Aorta (tissue), 5 donors: ENCODE measurements at regions of chr3 and their contacts with region 1.

Region 1: DNA sequence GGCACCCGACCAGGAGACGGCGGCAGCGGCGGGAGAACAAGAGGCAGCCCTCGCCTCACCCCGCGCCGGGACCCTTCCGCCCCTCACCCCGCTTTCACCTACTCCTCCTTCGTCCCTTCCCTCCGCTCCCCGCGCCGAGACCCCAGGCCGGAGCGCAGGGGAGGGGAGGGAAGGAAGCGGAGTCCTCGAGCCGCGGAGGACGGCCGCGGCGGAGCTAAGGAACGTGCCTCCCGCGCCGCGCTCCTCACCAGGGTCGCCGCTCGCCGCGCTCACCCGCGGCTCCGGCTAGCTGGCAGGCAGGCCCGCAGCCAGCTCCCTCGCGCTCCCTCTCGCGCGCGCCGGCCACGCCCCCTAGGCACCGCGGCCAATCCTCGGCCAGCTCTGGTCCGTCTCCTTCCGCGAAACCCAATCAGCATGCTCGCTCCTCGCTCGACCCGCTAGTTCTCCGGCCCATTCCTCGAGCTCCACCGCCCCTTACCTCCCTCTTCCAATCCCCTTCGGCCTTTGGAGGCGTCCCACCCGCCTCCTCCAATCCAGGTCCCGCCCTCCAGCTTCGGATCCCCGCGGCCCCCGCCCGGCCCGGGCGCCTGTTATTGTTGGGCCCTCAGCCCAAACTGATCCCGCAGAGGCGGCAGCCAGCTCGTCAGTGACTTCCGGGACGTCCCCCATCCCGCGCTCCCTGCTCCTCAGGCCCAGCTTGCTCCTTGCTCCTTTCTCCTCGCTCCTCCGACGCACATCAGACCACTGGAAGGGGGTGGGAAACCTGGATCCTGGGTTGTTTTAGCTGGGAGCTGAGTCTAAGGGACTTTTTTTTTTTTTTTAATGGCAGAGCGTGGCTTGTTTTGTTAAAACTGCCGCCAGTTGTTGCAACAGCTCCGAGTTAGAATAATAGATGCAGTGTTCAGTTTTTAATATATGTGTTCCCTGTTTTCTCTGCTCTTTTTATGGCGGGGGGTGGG is at the start of gene DCBLD2:
- DNase-seq: peak; percentile 98 to 99
- ATAC-seq: peak; percentile 98
- H3K4me3 ChIP-seq: peak within 1 kb of the TSS; percentile 65 to 80
- H3K27ac ChIP-seq: peak within 1 kb of the TSS; percentile 24 to 76
- H3K4me1 ChIP-seq: peaks cover 0 to 7% of the 10 kb centered on the region in 2 donors
- H3K27me3 ChIP-seq: no peaks in the 10 kb centered on the region
- total RNA-seq, gene DCBLD2: 27.5 to 36.3 TPM

Region 2: DNA sequence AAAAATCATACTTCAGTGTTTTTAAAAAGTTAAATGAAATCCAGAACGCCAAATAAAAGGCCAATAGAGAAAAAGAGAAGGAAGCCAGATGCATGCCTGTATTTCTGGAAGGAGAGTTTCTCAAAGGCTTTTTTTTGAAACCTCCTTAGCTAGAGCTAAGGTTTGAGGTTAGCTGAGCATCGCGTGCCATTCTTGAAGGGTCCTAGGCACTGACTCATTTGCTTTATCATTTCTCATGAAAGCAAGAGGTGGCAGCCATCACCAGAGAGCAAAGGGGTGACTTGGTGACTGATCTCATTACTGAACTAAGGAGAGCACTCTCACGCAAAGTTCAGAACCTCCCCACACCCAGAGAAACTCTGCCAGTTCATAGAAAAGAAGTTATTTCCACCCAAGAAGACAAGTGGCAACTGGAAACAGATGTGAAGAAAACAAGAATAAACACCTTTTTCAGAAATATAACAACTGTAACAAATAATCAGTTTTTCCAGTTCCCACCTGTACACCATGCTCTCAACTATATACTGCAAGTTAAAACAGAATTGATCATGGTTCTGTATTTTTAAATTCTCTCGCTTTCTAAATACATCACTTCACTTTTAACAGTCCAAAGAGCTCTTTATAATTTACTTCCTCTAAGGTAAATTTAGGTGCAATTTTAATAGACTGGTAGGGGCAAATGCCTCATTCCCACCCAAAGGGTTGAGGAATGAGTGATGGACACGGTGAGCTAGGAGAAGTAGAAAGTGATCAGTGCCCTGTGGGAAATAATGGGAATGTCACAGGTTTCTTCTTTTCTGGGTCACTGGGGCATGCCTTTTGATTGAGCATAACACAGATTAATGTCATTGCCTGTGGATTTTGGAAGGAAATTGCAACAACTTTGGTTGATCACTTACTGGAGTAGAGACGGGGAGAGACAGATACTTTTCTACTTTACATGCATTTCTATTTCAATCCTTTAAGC is 345.2 kb before region 1 on chr3:
- intact Hi-C with region 1: no loop called
- DNase-seq: no peak
- ATAC-seq: no peak
- H3K4me3 ChIP-seq: no peak overlapping the region
- H3K27ac ChIP-seq: no peak overlapping the region
- H3K4me1 ChIP-seq: no peaks in the 10 kb centered on the region
- H3K27me3 ChIP-seq: no peaks in the 10 kb centered on the region

Region 3: DNA sequence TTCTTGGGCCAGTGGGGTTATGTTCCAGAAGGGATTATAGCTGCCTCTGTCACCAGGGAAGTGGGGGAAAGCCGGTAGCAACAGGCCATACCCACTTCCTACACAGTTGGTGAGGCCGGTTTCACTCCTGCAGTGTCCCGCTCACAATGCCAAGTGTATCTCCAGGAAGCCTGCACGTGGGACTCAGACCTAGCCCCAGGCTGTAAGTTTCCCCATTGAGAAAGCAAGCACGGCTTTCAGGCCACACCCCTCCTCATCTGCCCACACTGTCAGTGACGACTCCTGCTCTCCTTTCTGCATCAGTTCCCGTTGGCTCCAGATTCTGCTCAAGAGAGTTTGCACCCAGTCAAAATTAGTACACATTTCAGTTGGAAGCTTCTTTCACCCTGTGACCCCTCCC is 256.6 kb before region 1 on chr3:
- intact Hi-C with region 1: no loop called
- DNase-seq: no peak
- ATAC-seq: no peak
- H3K4me3 ChIP-seq: no peak overlapping the region
- H3K27ac ChIP-seq: no peak overlapping the region
- H3K4me1 ChIP-seq: no peaks in the 10 kb centered on the region
- H3K27me3 ChIP-seq: no peaks in the 10 kb centered on the region

Region 4: DNA sequence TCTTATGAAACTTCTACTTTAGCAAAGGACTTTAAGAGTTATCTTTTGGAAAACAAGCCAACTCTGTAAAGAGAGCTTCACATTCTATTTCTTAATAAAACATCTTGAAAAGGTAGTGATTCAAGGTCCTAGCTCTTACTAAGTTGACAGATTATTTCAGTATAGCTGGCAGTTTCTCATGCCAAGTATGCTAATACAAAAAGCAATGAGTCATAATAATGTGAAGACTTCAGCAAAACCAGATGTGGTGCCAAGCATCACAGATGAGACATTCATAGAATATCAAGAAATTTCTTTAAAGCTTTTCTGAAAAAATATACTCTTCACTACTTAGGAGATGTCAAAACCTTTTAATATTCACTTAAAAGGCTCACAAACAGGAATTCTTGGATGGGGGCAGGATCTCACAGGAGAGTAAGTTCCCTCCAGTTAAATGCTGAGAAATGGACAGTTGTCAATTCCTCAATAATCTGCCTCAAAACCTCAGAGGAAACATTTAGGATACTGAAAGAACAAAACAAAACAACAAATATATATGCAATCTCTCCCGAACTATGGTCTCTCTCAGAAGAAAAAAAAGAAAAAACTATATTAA is 45.8 kb before region 1 on chr3:
- intact Hi-C with region 1: loop called in 1 of 2 experiments (anchors 5 kb)
- DNase-seq: no peak
- ATAC-seq: no peak
- H3K4me3 ChIP-seq: no peak overlapping the region
- H3K27ac ChIP-seq: no peak overlapping the region
- H3K4me1 ChIP-seq: no peaks in the 10 kb centered on the region
- H3K27me3 ChIP-seq: no peaks in the 10 kb centered on the region

Region 5: GRCh38 chr3:98962189-98962930 is 60.7 kb after region 1 on chr3:
- intact Hi-C with region 1: no loop called
- DNase-seq: no peak
- ATAC-seq: no peak
- H3K4me3 ChIP-seq: no peak overlapping the region
- H3K27ac ChIP-seq: no peak overlapping the region
- H3K4me1 ChIP-seq: peaks cover 0 to 1% of the 10 kb centered on the region in 2 donors
- H3K27me3 ChIP-seq: no peaks in the 10 kb centered on the region

Region 6: DNA sequence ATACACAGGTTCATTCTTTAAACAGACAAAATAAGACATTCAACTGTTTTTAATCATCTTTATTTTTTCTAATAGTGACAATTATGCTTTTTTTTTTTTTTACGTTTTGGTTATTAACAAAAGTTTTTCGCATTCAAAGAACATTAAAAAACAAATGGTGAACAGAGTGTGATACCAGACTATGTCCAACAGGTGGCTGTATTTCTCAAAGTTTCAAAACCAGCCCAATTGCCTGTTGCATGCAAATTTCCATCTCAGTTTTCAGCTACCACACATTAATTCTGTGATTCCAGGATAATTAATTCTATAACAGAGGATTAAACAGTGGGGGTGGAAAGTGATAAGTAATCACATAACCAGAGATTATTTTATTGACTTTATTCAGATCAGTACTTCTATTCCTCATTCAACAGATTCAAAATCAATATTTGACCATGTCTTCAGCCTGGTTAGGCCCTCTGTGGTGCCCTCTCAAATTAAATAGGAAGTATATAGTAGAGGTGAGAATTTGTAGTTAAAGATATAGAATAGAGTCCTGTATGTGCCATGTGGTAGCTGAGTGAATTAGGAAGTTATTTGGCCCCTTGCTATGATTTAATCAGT is 122.0 kb after region 1 on chr3:
- intact Hi-C with region 1: no loop called
- DNase-seq: no peak
- ATAC-seq: no peak
- H3K4me3 ChIP-seq: no peak overlapping the region
- H3K27ac ChIP-seq: no peak overlapping the region
- H3K4me1 ChIP-seq: no peaks in the 10 kb centered on the region
- H3K27me3 ChIP-seq: no peaks in the 10 kb centered on the region